ENCODE measurements at regions of chr12 and their contacts with region 1.

Region 1: GRCh38 chr12:92408072-92408900 is 262.6 kb upstream of the BTG1 start:
- DNase-seq: peak in 3 of 9 donors; percentile 29 to 40 (median 30)
- ATAC-seq: peak; percentile 34
- H3K4me3 ChIP-seq: no peak overlapping the region
- H3K4me3 Mint-ChIP-seq: peak overlapping the region in 4 of 10 donors; percentile 18 to 58 (median 28)
- H3K27ac ChIP-seq: no peak overlapping the region
- H3K27ac Mint-ChIP-seq: peak overlapping the region in 8 of 9 donors; percentile 30 to 89 (median 72)
- H3K4me1 ChIP-seq: peaks cover 30 to 33% of the 10 kb centered on the region in 2 donors
- H3K4me1 Mint-ChIP-seq: peaks cover 21 to 80% (median 67%) of the 10 kb centered on the region in 7 donors
- H3K27me3 ChIP-seq: no peaks in the 10 kb centered on the region
- H3K27me3 Mint-ChIP-seq: no peaks in the 10 kb centered on the region

Region 2: GRCh38 chr12:91382081-91382543 is 1026.2 kb before region 1 on chr12:
- CTCF ChIA-PET with region 1: interaction called, 6 read pairs
- POLR2A ChIA-PET with region 1: no interaction called
- intact Hi-C with region 1: loop called (anchors 1 to 2 kb)
- DNase-seq: peak; percentile 67 to 89 (median 78)
- ATAC-seq: peak; percentile 94
- H3K4me3 ChIP-seq: peak overlapping the region; percentile 18
- H3K4me3 Mint-ChIP-seq: peak overlapping the region; percentile 69 to 91 (median 81)
- H3K27ac ChIP-seq: no peak overlapping the region
- H3K27ac Mint-ChIP-seq: peak overlapping the region in 8 of 9 donors; percentile 16 to 85 (median 49)
- H3K4me1 ChIP-seq: no peaks in the 10 kb centered on the region
- H3K4me1 Mint-ChIP-seq: peaks cover 0 to 11% (median 6%) of the 10 kb centered on the region in 7 donors
- H3K27me3 ChIP-seq: no peaks in the 10 kb centered on the region
- H3K27me3 Mint-ChIP-seq: peaks cover 0 to 13% (median 0%) of the 10 kb centered on the region in 5 donors

Region 3: DNA sequence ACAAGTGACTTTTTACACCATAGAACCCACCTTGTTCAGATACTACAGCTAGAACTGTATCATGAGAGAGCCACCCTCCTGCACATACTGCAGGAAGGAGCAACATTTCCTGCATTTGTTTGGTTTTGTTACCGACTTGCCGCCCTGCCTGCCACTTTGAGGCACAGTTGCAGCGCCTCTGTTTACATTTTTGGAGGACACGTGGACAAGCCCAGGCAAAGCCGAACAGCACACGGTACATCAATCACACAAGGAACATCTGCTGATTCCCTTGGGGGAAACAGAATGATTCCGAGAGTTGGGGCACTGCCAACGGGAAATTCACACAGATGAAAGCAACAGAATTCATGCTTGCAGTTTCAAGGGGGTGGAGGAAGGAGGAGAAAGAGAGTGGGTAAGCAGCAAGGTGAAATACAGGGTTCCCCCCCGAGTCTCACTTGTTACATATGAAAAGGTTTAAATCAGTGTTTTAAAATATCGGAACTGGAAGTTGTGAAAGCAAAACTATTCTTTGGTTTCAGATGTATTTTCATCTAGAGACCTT is 373.4 kb before region 1 on chr12:
- CTCF ChIA-PET with region 1: interaction called, 3 read pairs
- POLR2A ChIA-PET with region 1: interaction called, 4 read pairs
- intact Hi-C with region 1: loop called in 1 of 2 experiments (anchors 2 kb)
- DNase-seq: peak; percentile 26 to 79 (median 71)
- ATAC-seq: peak; percentile 54
- H3K4me3 ChIP-seq: peak overlapping the region; percentile 52
- H3K4me3 Mint-ChIP-seq: peak overlapping the region; percentile 84 to 99 (median 91)
- H3K27ac ChIP-seq: peak overlapping the region; percentile 76
- H3K27ac Mint-ChIP-seq: peak overlapping the region; percentile 95 to 100 (median 99)
- H3K4me1 ChIP-seq: peaks cover 71 to 81% of the 10 kb centered on the region in 2 donors
- H3K4me1 Mint-ChIP-seq: peaks cover 49 to 100% (median 94%) of the 10 kb centered on the region in 7 donors
- H3K27me3 ChIP-seq: no peaks in the 10 kb centered on the region
- H3K27me3 Mint-ChIP-seq: no peaks in the 10 kb centered on the region

Region 4: DNA sequence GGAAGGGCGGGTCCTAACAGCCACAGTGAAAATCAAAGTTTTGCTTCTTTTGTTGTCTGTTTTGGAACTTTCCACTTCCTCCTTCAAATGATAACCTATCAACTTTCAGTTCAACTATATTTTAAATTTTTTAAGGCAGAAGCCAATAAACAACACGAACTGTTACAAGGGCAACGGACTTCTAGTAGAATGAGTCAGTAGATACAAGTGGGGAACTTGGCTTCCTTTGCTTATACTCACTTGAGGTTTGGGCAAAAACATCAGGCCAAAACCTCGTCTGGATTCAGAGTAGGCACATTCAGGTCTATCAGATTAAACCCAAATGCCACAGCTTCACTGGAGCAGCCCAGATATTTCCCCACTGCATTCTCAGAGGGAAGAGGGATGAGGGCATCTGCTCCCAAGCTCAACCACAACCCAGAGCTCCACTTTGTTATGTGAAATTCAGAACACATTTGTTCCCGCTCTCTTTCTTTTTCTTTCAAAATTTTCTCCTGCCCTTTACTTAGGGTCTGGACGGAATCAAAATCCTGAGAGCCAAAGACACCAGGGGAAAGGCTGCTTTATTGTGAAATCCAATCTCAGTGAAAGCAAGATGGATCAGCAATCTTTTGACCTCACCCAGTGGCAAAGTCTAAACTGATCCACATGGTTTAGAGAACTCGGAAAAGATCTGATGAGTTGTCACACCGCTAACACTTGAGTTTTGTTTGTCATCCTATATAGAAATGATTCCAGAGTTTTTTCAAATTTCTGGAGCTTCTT is 110.2 kb before region 1 on chr12:
- CTCF ChIA-PET with region 1: interaction called, 3 read pairs
- POLR2A ChIA-PET with region 1: interaction called, 5 read pairs
- intact Hi-C with region 1: loop called (anchors 1 to 5 kb)
- DNase-seq: peak in 7 of 9 donors; percentile 29 to 75 (median 58)
- ATAC-seq: peak; percentile 83
- H3K4me3 ChIP-seq: no peak overlapping the region
- H3K4me3 Mint-ChIP-seq: peak overlapping the region in 9 of 10 donors; percentile 9 to 80 (median 63)
- H3K27ac ChIP-seq: peak overlapping the region; percentile 57
- H3K27ac Mint-ChIP-seq: peak overlapping the region in 2 of 9 donors; percentile 85 to 96
- H3K4me1 ChIP-seq: peaks cover 17 to 42% of the 10 kb centered on the region in 2 donors
- H3K4me1 Mint-ChIP-seq: peaks cover 8 to 33% (median 27%) of the 10 kb centered on the region in 7 donors
- H3K27me3 ChIP-seq: no peaks in the 10 kb centered on the region
- H3K27me3 Mint-ChIP-seq: no peaks in the 10 kb centered on the region

Region 5: DNA sequence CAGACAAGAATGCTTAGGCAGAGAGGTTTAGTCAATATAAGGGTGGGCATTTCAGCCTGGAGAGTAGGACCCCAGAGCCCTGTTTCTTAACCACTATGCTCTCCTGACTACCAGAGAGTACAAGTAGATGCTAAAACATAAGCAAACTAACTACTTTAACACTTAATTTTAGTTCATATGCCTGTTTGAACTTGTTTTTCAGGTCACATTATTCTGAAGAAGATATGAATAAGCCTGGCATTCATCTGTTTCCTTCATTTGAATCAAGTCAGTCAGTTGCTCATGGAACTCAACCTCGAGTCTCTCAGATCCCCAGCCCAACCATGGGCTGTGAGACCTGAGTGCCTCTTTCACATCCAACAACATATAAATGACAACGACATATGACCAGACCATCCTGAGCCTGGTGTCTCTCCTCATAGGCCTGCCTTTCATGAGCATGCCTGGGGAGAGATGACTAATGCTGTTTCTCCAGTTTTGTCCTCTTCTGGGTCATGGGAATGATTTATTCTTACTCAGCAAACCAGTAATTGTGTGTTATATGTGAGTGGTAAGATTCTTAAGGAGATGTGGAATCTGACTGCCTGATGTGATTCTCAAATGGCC is 11.5 kb before region 1 on chr12:
- CTCF ChIA-PET with region 1: interaction called, 5 read pairs
- POLR2A ChIA-PET with region 1: interaction called, 14 read pairs
- intact Hi-C with region 1: no loop called
- DNase-seq: no peak
- ATAC-seq: no peak
- H3K4me3 ChIP-seq: no peak overlapping the region
- H3K4me3 Mint-ChIP-seq: peak overlapping the region in 8 of 10 donors; percentile 9 to 76 (median 62)
- H3K27ac ChIP-seq: peak overlapping the region; percentile 85
- H3K27ac Mint-ChIP-seq: peak overlapping the region; percentile 90 to 100 (median 98)
- H3K4me1 ChIP-seq: peaks cover 76 to 84% of the 10 kb centered on the region in 2 donors
- H3K4me1 Mint-ChIP-seq: peaks cover 56 to 100% (median 93%) of the 10 kb centered on the region in 7 donors
- H3K27me3 ChIP-seq: no peaks in the 10 kb centered on the region
- H3K27me3 Mint-ChIP-seq: no peaks in the 10 kb centered on the region

Region 6: DNA sequence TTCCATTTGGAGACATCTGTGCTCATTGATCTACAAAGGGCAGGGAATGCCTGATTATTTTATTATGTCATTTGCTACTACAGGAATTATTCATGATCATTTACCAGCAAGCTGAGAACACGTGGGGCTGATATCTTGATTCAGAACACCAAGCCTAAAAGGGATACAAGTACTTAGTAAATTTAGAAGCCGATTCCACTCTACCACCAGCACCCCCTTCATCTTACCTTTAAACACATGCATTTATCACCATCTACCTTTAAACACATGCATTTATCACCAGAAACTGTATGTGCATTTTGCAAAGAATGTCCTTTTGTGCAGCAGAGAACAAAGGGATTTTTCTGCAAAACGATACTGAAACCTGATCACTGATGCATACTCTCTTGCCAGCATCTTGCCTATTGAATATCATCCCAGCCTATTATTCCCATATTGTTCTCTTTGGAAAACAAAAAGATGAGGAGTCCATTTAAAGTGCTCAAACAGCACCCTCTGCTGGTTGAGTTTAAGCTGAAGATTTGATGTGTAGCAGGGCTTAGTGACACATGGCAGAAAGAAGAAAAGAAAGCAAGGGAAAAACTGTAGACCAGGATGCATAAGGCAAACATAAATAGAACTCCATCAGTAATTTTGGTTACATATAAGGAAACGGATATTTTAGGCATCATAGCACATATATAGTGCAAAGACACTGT is 161.9 kb after region 1 on chr12:
- CTCF ChIA-PET with region 1: interaction called, 7 read pairs
- POLR2A ChIA-PET with region 1: interaction called, 6 read pairs
- intact Hi-C with region 1: loop called (anchors 1 kb)
- DNase-seq: peak in 7 of 9 donors; percentile 67 to 86 (median 80)
- ATAC-seq: peak; percentile 92
- H3K4me3 ChIP-seq: no peak overlapping the region
- H3K4me3 Mint-ChIP-seq: no peak overlapping the region
- H3K27ac ChIP-seq: peak overlapping the region; percentile 52
- H3K27ac Mint-ChIP-seq: no peak overlapping the region
- H3K4me1 ChIP-seq: peaks cover 11 to 13% of the 10 kb centered on the region in 2 donors
- H3K4me1 Mint-ChIP-seq: peaks cover 0 to 37% (median 6%) of the 10 kb centered on the region in 7 donors
- H3K27me3 ChIP-seq: no peaks in the 10 kb centered on the region
- H3K27me3 Mint-ChIP-seq: no peaks in the 10 kb centered on the region